Transverse colon (tissue), 4 donors: ENCODE measurements at regions of chr15 and their contacts with region 1.

Region 1: DNA sequence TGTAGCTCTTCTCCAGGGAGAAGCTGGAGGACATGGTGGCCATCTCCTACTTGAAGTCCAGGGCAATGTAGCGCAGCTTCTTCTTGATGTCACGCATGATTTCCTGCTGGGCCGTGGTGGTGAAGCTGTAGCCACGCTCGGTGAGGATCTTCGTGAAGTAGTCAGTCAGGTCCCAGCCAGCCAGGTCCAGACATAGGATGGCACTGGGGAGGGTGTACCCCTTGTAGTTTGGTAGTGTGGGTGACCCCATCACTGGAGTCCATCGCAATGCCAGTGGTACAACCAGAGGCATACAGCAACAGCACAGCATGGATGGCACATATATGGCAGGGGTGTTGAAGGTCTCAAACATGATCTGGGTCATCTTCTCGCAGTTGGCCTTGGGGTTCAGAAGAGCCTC is 7.0 kb upstream of the LPCAT4 start:
- DNase-seq: no peak
- H3K4me3 ChIP-seq: no peak overlapping the region
- H3K27ac ChIP-seq: no peak overlapping the region
- H3K4me1 ChIP-seq: no peaks in the 10 kb centered on the region
- H3K27me3 ChIP-seq: no peaks in the 10 kb centered on the region
- CTCF ChIP-seq: no peak
- EP300 ChIP-seq: no peak
- POLR2A ChIP-seq: no peak

Region 2: DNA sequence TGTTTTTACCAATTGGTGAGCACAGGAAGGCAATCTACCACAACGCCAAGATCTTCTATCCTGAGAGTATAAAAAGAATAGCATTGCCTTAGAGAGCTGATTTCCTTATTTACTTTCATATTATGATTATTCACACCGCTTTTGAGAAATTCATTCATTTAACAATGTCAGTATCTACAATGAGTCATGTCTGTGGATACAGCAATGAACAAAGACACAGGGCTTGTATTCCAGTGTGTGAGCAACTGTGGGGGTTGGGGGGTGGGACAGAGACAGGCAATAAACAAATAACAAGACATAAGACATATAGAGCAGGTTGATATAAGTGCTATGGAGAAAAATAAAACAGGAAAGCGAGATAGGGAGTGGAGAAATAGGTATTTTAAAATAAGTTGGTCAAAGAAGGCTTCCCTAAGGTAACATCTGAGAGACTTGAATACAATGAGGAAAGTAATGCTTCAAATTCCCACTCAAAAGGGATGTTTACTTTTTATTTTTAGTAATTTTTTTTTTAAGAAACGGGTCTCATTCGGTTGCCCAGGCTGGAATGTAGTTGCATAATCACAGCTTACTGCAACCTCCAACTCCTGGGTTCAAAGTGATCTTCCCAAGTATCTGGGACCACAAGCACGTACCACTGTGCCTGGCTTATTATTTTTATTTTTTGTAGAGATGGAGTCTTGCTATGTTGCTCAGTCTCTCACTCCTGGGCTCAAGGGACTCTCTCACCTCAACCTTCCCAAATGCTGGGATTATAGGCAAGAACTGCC is 226.4 kb before region 1 on chr15:
- in situ Hi-C with region 1: no loop called
- intact Hi-C with region 1: no loop called
- DNase-seq: no peak
- H3K4me3 ChIP-seq: no peak overlapping the region
- H3K27ac ChIP-seq: no peak overlapping the region
- H3K4me1 ChIP-seq: no peaks in the 10 kb centered on the region
- H3K27me3 ChIP-seq: no peaks in the 10 kb centered on the region
- CTCF ChIP-seq: no peak
- EP300 ChIP-seq: no peak
- POLR2A ChIP-seq: no peak

Region 3: GRCh38 chr15:34259566-34259965 is 114.4 kb before region 1 on chr15:
- in situ Hi-C with region 1: loop called in 1 of 4 experiments (anchors 10 kb)
- intact Hi-C with region 1: no loop called
- DNase-seq: no peak
- H3K4me3 ChIP-seq: no peak overlapping the region
- H3K27ac ChIP-seq: no peak overlapping the region
- H3K4me1 ChIP-seq: peaks cover 0 to 10% (median 0%) of the 10 kb centered on the region in 4 donors
- H3K27me3 ChIP-seq: no peaks in the 10 kb centered on the region
- CTCF ChIP-seq: no peak
- EP300 ChIP-seq: no peak
- POLR2A ChIP-seq: no peak